Posterior vena cava (tissue), 2 donors: ENCODE measurements at regions of chr16 and their contacts with region 1.

Region 1: GRCh38 chr16:2082160-2082982 is 34.6 kb downstream of the TSC2 start:
- DNase-seq: no peak

Region 2: GRCh38 chr16:2009789-2010510 is 72.4 kb before region 1 on chr16 and contains the start of gene ZNF598:
- intact Hi-C with region 1: no loop called
- DNase-seq: peak; percentile 94
- total RNA-seq, gene ZNF598: 29.4 to 38.7 TPM

Region 3: GRCh38 chr16:2056681-2057407 is 25.5 kb before region 1 on chr16:
- intact Hi-C with region 1: loop called in 1 of 2 experiments (anchors 2 kb)
- DNase-seq: no peak

Region 4: DNA sequence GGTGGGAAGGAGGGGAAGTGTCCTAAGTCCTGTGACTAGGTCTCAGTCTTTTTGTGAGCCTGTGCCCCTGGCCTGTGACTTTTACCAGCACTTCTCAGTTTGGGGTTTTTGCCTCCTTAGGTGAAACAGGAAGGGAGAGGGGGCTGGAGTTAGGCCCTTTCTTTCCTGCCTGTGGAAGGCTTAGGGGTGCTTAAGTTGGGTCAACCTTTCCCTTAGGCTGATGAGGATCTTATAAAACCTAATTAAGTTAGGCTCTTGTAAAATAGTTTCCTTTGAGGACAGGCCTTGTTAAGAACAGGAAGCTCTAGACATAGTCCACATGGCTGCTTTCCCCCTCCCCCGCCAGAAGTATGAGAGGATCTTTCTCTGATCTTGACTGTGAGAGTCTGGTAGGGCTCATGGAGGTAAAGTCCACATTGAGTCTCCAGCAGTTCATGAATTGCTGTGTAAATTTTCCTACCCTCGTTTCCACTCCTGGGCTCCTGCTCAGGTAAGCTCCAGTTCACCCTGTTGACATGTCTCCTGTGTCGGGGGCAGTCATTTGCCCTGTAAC is 1555.1 kb after region 1 on chr16:
- intact Hi-C with region 1: loop called in 1 of 2 experiments (anchors 10 kb)
- DNase-seq: no peak